Activated T-helper 2 cell treated with anti-CD3 and anti-CD28 coated beads, Interferon-gamma antibody, Interleukin-2, Interleukin-4, amounts not matched to agents 10 μg/mL and 5 μg/mL and 100 μg/mL, durations not matched to agents 14 hours and 24 hours and 36 hours (primary cell): ENCODE measurements at regions of chr4 and their contacts with region 1.

Region 1: DNA sequence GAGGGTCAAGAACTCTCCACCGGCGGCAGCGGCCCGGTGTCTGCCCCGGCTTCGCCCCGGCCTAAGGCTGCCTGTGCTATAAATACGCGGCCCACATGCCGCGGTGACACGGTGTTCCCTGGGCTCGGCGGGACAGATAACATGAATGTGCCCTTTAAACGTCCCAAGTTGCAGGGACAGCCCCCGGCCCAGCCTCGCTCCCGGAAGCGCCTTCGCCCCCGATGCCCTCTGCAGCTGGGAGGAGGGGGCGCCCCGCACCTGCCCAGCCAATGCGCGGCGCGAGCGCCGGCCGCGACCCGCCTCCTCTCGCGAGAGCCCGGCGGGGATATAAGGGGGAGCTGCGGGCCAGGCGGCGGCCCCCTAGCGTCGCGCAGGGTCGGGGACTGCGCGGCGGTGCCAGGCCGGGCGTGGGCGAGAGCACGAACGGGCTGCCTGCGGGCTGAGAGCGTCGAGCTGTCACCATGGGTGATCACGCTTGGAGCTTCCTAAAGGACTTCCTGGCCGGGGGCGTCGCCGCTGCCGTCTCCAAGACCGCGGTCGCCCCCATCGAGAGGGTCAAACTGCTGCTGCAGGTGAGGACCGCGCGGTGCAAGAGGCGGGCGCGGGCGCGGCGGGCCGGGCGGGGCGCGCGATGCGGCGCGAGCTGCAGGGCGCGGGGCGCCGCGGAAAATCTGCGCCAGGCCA is at the start of gene SLC25A4:
- DNase-seq: peak; percentile 61
- H3K4me3 Mint-ChIP-seq: peak within 1 kb of the TSS; percentile 83
- H3K27ac Mint-ChIP-seq: no peak within 1 kb of the TSS
- H3K4me1 Mint-ChIP-seq: peaks cover 4% of the 10 kb centered on the region
- H3K27me3 Mint-ChIP-seq: peaks cover 64% of the 10 kb centered on the region
- total RNA-seq, gene SLC25A4: 5.0 and 6.0 TPM in 2 replicates

Region 2: DNA sequence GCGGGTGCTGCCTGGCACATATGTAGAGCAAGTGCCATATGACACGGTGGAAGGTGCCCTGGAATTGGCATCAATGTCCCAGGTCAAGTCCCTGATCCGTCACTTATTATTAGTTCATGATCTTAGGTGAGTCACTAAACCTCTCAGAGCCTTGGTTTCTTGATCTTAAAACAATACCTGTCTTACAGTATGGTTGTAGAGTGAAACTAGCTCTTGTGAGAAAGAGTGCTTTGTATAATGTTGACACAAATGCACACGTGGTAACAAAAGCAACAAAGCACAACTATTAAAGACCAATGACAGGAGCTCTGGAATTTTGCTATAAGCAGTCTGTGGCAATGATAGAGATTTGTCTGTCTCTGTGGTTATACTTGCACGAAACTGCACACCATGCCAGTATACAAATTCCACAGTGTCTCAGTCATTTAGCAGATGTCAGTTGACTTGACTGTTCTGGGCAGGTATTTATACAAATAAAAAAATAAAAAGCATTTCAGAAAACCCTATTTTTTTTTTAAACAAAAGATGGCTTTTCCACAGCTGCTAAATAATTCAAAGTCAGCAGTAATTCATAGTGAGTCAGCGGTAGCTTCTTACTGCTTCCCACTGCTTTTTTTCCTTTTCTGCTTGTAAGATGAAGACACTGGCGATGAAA is 297.6 kb before region 1 on chr4:
- intact Hi-C with region 1: no loop called
- DNase-seq: no peak
- H3K4me3 Mint-ChIP-seq: no peak overlapping the region
- H3K27ac Mint-ChIP-seq: no peak overlapping the region
- H3K4me1 Mint-ChIP-seq: peaks cover 32% of the 10 kb centered on the region
- H3K27me3 Mint-ChIP-seq: peaks cover 6% of the 10 kb centered on the region

Region 3: DNA sequence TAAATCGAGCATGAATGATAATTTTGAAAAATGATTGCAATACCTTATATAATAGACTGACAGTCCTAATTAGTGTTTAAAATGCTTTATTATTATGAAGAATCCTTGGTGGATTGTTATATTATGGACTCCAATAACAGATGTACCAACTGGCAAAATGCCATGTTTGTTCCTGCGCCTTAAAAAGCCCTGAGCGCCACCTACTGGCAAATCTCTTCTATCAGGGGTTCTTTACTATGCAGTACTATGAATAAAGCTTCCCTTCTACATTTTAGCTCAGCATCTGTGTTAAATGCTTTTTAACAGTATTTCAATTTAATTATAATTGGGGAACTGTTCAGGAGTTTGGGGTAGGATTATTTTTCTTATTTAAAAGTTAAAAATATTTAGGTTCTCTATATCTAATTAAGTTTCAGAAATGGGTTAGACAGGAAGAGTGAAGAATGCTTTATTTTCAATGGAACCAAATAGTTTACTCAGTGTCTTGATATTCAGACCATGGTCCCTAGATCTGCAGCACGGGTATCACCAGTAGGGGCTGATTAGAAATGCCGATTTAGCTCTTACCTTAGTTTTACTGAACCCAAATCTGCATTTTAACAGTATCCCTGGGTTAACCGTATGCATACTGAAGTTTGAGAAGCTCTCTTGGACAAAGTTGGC is 40.7 kb after region 1 on chr4:
- intact Hi-C with region 1: loop called (anchors 2 kb)
- DNase-seq: peak; percentile 49
- H3K4me3 Mint-ChIP-seq: no peak overlapping the region
- H3K27ac Mint-ChIP-seq: no peak overlapping the region
- H3K4me1 Mint-ChIP-seq: peaks cover 14% of the 10 kb centered on the region
- H3K27me3 Mint-ChIP-seq: no peaks in the 10 kb centered on the region